Posterior cingulate gyrus (tissue), 11 donors: ENCODE measurements at regions of chr11 and their contacts with region 1.

Region 1: GRCh38 chr11:108703916-108704315 is 39.0 kb downstream of the DDX10 start:
- DNase-seq: no peak

Region 2: DNA sequence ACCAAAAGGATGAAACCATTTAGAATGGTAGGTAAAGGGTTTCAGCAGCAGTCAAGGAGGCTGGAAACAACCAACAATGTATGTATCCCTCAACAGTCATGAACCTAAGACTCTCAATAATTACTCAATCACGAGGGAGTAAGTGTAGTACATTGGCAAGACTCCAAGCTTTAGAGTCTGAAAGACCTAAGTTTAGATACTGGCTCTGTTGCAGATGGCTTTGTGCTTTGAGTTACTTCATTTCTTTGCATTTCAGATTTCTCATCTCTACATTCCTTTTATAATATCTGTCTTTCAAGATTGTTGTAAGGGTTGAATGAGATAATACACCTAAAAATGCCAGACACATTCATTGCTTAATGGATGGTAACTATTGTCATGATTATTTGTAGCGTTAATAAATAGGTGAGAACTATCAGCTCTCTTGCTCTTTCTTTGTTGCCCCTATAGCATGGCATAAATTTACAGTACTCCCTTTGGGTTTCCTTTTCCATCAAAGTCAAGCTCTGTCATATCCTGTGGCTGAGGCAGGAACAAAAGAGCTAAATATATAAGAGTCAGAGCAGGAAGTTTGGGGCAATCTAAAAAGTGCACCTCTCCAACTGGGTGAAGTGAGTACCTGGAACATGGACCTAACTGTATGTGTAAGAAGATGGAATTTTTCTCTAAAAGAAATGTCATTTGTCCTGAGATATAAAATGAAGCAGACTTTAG is 1161.1 kb after region 1 on chr11:
- intact Hi-C with region 1: loop called (anchors 10 kb)
- DNase-seq: no peak